Mucosa of descending colon (tissue), 3 donors: ENCODE measurements at regions of chr7 and their contacts with region 1.

Region 1: GRCh38 chr7:47088329-47089067 is 493.4 kb downstream of the TNS3 start:
- DNase-seq: peak in 2 of 3 donors; percentile 38 to 61
- ATAC-seq: peak; percentile 68
- H3K4me3 ChIP-seq: no peak overlapping the region
- H3K4me1 ChIP-seq: no peaks in the 10 kb centered on the region
- CTCF ChIP-seq: peak; percentile 52

Region 2: GRCh38 chr7:45917658-45918057 is 1170.8 kb before region 1 on chr7:
- intact Hi-C with region 1: loop called (anchors 5 to 10 kb)
- DNase-seq: peak; percentile 59 to 84 (median 81)
- ATAC-seq: peak; percentile 63
- H3K4me3 ChIP-seq: no peak overlapping the region
- H3K4me1 ChIP-seq: no peaks in the 10 kb centered on the region
- CTCF ChIP-seq: peak; percentile 87

Region 3: DNA sequence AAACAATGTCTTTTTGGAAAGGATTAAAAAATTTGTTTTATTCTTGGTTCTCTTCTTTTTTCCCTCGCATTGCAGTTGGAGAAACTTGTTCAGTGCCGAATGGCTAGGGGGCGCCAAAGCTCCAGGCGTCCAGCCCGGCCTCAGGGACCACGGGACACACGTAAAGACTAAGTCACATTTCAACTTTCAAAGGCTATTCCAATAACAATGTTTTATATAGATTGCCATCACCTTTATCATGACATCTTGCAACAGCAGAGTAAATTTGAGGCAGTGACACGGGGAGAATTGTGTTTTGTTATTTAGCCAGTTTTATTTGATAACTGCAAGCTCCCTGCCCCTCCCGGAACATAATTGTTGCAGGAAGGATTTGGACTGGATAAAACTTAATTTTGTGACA is 1165.2 kb before region 1 on chr7:
- intact Hi-C with region 1: loop called (anchors 5 to 10 kb)
- DNase-seq: peak in 2 of 3 donors; percentile 75 to 81
- ATAC-seq: peak; percentile 54
- H3K4me3 ChIP-seq: no peak overlapping the region
- H3K4me1 ChIP-seq: no peaks in the 10 kb centered on the region
- CTCF ChIP-seq: peak; percentile 69